Activated T-helper 1 cell treated with anti-CD3 and anti-CD28 coated beads, Interleukin-12 subunit alpha, Interleukin-12 subunit beta, Interleukin-2, Interleukin-4 antibody, amounts not matched to agents 30 ng/mL and 10 ng/mL and 1 ng/mL, durations not matched to agents 14 hours and 24 hours and 36 hours (primary cell): ENCODE measurements at regions of chr19 and their contacts with region 1.

Region 1: GRCh38 chr19:32691291-32691951 is at the start of gene NUDT19:
- DNase-seq: peak; percentile 74
- H3K4me3 Mint-ChIP-seq: peak within 1 kb of the TSS; percentile 95
- H3K27ac Mint-ChIP-seq: peak within 1 kb of the TSS; percentile 98
- H3K4me1 Mint-ChIP-seq: peaks cover 54% of the 10 kb centered on the region
- H3K27me3 Mint-ChIP-seq: no peaks in the 10 kb centered on the region
- total RNA-seq, gene NUDT19: 24.4 and 26.2 TPM in 2 replicates

Region 2: DNA sequence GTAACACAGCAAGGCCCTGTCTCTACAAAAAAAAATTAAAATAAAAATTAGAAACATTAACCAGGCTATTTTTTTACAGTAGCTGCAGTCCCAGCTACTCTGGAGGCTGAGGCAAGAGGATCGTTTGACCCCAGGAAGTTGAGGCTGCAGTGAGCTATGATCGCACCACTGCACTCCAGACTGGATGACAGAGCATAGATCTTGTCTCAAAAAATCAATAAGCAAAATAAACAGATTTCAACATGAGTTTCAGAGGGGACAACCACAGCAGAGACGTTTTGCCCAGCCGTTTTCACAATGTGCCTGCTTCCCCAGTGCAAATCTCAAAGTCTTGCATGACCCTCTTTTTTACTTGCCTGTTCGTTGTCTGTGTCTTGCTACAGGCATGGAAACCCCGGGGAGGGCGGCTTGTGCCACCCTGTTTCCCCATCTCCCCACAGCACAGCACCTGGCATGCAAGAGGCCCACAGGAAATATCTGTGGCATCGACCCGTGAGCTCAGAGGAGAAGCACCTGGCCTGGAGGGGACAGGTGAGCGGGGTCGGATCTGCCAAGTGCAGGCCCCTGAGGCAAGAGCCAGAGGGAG is 568.0 kb before region 1 on chr19:
- intact Hi-C with region 1: no loop called
- DNase-seq: no peak
- H3K4me3 Mint-ChIP-seq: no peak overlapping the region
- H3K27ac Mint-ChIP-seq: no peak overlapping the region
- H3K4me1 Mint-ChIP-seq: no peaks in the 10 kb centered on the region
- H3K27me3 Mint-ChIP-seq: no peaks in the 10 kb centered on the region

Region 3: GRCh38 chr19:32405431-32406161 is 285.8 kb before region 1 on chr19 and contains the start of gene DPY19L3:
- intact Hi-C with region 1: loop called (anchors 5 kb)
- DNase-seq: peak; percentile 89
- H3K4me3 Mint-ChIP-seq: peak within 1 kb of the TSS; percentile 90
- H3K27ac Mint-ChIP-seq: peak within 1 kb of the TSS; percentile 88
- H3K4me1 Mint-ChIP-seq: peaks cover 17% of the 10 kb centered on the region
- H3K27me3 Mint-ChIP-seq: peaks cover 5% of the 10 kb centered on the region
- total RNA-seq, gene DPY19L3: 11.9 and 16.5 TPM in 2 replicates

Region 4: GRCh38 chr19:32599736-32600157 is 91.7 kb before region 1 on chr19:
- intact Hi-C with region 1: loop called (anchors 5 kb)
- DNase-seq: peak; percentile 21
- H3K4me3 Mint-ChIP-seq: no peak overlapping the region
- H3K27ac Mint-ChIP-seq: no peak overlapping the region
- H3K4me1 Mint-ChIP-seq: peaks cover 8% of the 10 kb centered on the region
- H3K27me3 Mint-ChIP-seq: no peaks in the 10 kb centered on the region

Region 5: DNA sequence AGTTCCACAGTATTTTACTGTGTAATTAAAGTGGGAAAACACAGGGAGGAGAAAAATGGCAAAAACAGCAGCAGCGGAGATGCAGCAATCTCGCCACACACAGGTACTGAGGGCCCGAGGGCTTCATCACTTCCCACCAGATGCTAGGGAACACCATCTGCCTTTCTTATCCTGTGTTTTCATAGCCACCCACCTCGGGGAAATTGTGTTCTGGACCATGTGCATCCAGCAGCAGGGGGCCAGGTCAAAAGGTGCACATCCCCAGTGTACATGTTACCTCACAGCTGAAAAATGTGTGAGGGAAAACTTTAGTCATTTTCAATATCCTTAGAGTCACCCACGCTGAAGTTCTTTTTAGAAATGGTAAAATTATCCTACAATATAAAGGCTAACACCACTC is 80.3 kb before region 1 on chr19:
- intact Hi-C with region 1: no loop called
- DNase-seq: no peak
- H3K4me3 Mint-ChIP-seq: no peak overlapping the region
- H3K27ac Mint-ChIP-seq: no peak overlapping the region
- H3K4me1 Mint-ChIP-seq: no peaks in the 10 kb centered on the region
- H3K27me3 Mint-ChIP-seq: no peaks in the 10 kb centered on the region

Region 6: DNA sequence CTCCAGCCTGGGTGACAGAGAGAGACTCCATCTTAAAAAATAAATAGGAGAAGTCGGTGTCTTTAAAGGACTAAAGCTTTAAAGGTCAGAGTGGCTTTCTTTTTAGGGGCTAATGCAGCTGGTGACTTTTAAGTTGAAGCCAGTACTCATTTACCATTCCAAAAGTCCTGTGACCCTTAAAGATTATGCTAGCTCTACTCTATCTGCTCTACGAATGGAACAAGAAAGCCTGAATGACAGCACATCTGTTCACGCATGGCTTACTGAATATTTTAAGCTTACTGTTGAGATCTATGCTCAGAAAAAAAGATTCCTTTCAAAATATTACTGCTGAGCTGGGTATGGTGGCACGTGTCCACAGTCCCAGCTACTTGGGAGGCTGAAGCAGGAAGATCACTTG is 44.5 kb after region 1 on chr19:
- intact Hi-C with region 1: no loop called
- DNase-seq: no peak
- H3K4me3 Mint-ChIP-seq: no peak overlapping the region
- H3K27ac Mint-ChIP-seq: no peak overlapping the region
- H3K4me1 Mint-ChIP-seq: no peaks in the 10 kb centered on the region
- H3K27me3 Mint-ChIP-seq: peaks cover 9% of the 10 kb centered on the region

Region 7: GRCh38 chr19:32798201-32798600 is 106.8 kb after region 1 on chr19:
- intact Hi-C with region 1: loop called (anchors 1 kb)
- DNase-seq: no peak
- H3K4me3 Mint-ChIP-seq: no peak overlapping the region
- H3K27ac Mint-ChIP-seq: no peak overlapping the region
- H3K4me1 Mint-ChIP-seq: peaks cover 23% of the 10 kb centered on the region
- H3K27me3 Mint-ChIP-seq: no peaks in the 10 kb centered on the region

Region 8: DNA sequence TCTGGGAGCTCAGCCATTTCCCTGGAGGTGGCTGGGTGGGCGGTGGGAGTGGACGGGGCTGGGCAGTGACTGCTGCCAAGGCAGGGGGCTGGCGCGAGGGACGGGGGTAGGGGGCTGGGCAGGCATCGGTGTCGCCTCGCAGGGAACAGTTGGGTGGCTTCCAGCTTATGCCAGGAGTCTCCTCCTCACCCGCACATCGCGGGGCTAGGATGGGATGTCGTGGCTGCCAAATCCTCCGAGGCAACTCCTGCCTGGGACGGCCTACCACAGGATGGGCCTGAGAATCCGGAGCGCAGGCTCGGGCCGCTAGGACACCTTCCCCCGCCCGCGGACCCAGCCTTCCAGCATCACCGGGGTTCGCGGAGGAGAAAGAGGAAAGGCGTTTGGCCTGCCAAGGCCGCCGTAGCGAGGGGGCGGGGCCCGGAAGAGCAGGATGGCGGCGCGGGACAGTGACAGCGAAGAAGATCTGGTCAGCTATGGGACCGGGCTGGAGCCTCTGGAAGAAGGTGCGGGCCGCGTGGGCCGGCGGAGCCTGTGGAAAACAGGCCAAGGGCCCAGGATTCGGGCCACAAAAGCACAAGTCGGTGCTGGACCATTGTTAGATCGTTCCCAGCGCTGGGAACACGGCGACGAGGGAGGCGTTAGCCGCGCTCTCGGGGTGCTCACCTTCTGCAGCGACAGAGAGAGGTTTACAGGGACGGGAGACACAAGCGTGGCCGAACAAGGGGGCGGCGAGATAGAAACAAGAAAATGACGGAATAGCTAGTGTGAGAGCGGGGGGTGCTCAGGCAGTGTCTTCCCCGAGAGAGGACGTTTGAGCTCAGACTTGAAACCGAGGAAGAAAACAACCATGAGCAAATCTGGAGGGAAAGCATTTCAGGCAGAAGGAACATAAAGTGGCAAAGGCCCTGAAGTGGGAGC is 389.6 kb after region 1 on chr19 and contains the start of gene GPATCH1:
- intact Hi-C with region 1: loop called (anchors 2 kb)
- DNase-seq: peak; percentile 85
- H3K4me3 Mint-ChIP-seq: peak within 1 kb of the TSS; percentile 98
- H3K27ac Mint-ChIP-seq: peak within 1 kb of the TSS; percentile 90
- H3K4me1 Mint-ChIP-seq: peaks cover 31% of the 10 kb centered on the region
- H3K27me3 Mint-ChIP-seq: no peaks in the 10 kb centered on the region
- total RNA-seq, gene GPATCH1: 11.1 and 13.5 TPM in 2 replicates

Region 9: GRCh38 chr19:33373701-33374421 is 682.4 kb after region 1 on chr19 and contains the start of gene CEBPG:
- intact Hi-C with region 1: loop called (anchors 5 kb)
- DNase-seq: peak; percentile 60
- H3K4me3 Mint-ChIP-seq: peak within 1 kb of the TSS; percentile 93
- H3K27ac Mint-ChIP-seq: peak within 1 kb of the TSS; percentile 69
- H3K4me1 Mint-ChIP-seq: peaks cover 39% of the 10 kb centered on the region
- H3K27me3 Mint-ChIP-seq: no peaks in the 10 kb centered on the region
- total RNA-seq, gene CEBPG: 30.4 and 31.3 TPM in 2 replicates